ENCODE measurements at regions of chr11 and their contacts with region 1.

Region 1: DNA sequence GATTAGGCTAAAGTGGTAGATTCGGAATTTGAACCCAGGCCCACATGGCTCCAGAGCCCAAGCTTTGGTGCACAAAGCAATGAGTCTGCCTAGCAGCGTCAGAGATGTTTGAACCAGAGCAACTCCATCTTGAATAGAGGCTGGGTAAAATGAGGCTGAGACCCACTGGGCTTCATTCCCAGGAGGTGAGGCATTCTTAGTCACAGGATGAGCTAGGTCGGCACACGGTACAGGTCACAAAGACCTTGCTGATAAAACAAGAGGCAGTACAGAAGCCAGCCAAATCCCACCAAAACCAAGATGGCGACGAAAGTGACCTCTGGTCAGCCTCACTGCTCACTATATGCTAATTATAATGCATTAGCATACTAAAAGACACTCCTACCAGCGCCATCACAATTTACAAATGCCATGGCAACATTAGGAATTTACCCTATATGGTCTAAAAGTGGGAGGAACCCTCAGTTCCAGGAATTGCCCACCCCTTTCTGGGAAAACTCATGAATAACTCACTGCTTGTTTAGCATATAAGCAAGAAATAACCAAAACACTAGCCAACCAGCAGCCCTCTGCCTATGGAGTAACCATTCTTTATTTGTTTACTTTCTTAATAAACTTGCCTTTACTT is 40.3 kb upstream of the DAGLA start:
- DNase-seq: no peak
- H3K4me3 ChIP-seq: no peak overlapping the region
- H3K27ac ChIP-seq: no peak overlapping the region
- H3K4me1 ChIP-seq: peaks cover 0 to 5% (median 3%) of the 10 kb centered on the region in 4 experiments; a peak in 2 of 7 replicates
- H3K27me3 ChIP-seq: no peaks in the 10 kb centered on the region
- CTCF ChIP-seq: no peak
- EP300 ChIP-seq: no peak
- POLR2A ChIP-seq: no peak
- RAD21 ChIP-seq: no peak

Region 2: DNA sequence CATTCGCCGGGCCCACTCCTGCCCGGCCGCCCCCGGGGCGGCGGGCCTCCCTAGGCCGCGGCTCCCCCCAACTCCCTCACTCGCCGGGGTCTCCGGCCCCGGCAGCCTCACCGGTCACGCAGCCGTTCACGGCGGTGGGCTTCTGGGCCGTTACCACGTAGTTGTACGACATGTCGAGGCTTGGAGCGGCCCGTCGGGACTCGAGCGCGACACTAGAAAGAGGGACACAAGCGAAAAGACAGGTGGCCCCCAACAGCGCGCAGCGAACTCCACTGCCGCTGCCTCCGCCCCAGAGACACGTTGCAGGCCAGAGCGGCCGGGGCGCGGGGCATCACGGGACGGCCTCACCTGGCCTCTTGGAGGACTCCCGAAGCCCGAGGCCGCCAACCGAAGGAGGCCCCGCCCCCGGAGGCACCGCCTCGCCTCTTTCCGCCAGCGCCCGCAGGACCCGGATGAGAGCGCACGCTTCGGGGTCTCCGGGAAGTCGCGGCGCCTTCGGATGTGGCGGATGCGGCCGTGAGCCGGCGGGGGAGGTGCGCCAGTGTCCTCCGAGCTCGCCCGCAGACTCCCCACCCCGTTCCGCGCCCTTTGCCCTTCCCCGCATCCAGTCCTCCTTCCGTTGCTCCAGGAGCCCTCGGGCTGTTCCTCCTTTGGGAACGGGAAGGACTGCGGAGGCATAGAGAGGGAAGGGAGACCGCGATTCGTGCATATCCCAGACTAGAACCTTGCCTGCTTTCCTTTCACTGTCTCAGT is 307.0 kb before region 1 on chr11 and contains the starts of genes DDB1 and TKFC:
- CTCF ChIA-PET with region 1: interaction called, 10 read pairs
- POLR2A ChIA-PET with region 1: no interaction called
- DNase-seq: peak; percentile 84 to 99
- H3K4me3 ChIP-seq: peak within 1 kb of the TSS; percentile 79 to 96 (median 92)
- H3K27ac ChIP-seq: peak within 1 kb of the TSS; percentile 96
- H3K4me1 ChIP-seq: peaks cover 5 to 14% (median 9%) of the 10 kb centered on the region in 4 experiments
- H3K27me3 ChIP-seq: no peaks in the 10 kb centered on the region
- CTCF ChIP-seq: no peak
- EP300 ChIP-seq: no peak
- POLR2A ChIP-seq: peak; percentile 94 to 96
- RAD21 ChIP-seq: no peak
- total RNA-seq, gene DDB1: 275 and 283 TPM in 2 replicates
- total RNA-seq, gene TKFC: 53.5 and 56.0 TPM in 2 replicates

Region 3: GRCh38 chr11:61516675-61517572 is 123.0 kb before region 1 on chr11:
- CTCF ChIA-PET with region 1: interaction called, 114 read pairs
- POLR2A ChIA-PET with region 1: no interaction called
- DNase-seq: peak in 1 of 2 experiments; percentile 96
- H3K4me3 ChIP-seq: peak overlapping the region in 1 of 4 experiments; percentile 39; a peak in 1 of 8 replicates
- H3K27ac ChIP-seq: no peak overlapping the region
- H3K4me1 ChIP-seq: peaks cover 0 to 41% (median 27%) of the 10 kb centered on the region in 4 experiments; a peak in 6 of 7 replicates
- H3K27me3 ChIP-seq: no peaks in the 10 kb centered on the region; a peak in 2 of 7 replicates
- CTCF ChIP-seq: peak in 2 of 3 experiments; percentile 98; a peak in 3 of 4 replicates
- EP300 ChIP-seq: no peak
- POLR2A ChIP-seq: no peak
- RAD21 ChIP-seq: peak; percentile 98 to 99

Region 4: GRCh38 chr11:61567286-61568061 is 72.5 kb before region 1 on chr11:
- CTCF ChIA-PET with region 1: interaction called, 60 read pairs
- POLR2A ChIA-PET with region 1: no interaction called
- DNase-seq: peak; percentile 58 to 98
- H3K4me3 ChIP-seq: peak overlapping the region; percentile 16 to 54 (median 39); a peak in 6 of 8 replicates
- H3K27ac ChIP-seq: no peak overlapping the region
- H3K4me1 ChIP-seq: peaks cover 0 to 14% (median 5%) of the 10 kb centered on the region in 4 experiments; a peak in 5 of 7 replicates
- H3K27me3 ChIP-seq: peaks cover 0 to 10% (median 4%) of the 10 kb centered on the region in 4 experiments; a peak in 3 of 7 replicates
- CTCF ChIP-seq: peak; percentile 95 to 98 (median 96)
- EP300 ChIP-seq: no peak
- POLR2A ChIP-seq: no peak
- RAD21 ChIP-seq: peak; percentile 40 to 63; a peak in 3 of 4 replicates

Region 5: DNA sequence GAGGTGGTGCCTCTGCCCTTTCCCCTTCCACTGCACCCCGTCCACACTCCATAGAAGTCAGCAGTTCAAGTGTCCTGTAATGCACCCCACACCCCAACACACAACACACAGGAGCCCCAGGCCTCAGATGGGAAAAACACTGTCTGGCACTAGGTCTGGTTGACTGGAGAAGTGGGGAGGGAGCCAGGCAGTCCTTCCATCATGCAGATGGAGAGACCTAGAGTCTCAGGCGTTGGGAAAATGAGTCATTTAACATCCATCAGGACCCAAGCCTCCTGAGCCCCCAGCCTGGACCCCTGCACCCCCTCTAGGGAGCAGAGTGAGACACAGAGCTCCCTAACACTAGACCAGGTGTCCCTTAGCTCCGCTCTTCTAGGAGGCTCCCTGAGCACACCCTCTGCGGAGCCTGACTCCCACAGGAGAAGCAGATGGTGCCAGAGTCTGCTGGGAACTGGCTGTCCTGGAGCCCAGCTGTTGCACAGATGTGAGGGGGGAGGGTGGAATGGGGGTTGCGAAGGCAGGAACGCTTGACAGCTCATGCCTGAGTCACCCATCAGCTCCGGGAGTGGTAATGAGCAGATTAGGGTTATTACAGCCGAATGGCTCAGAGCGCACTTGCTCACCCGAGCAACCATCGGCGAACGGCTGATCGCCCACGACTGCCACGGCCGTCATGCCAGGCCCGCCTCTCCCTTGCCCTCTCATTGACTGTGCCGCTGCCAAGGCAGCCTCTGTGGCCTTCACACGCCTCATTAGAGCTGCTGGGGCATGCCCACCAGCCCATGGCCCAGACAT is 37.0 kb before region 1 on chr11:
- CTCF ChIA-PET with region 1: interaction called, 335 read pairs
- POLR2A ChIA-PET with region 1: no interaction called
- DNase-seq: no peak
- H3K4me3 ChIP-seq: no peak overlapping the region
- H3K27ac ChIP-seq: no peak overlapping the region
- H3K4me1 ChIP-seq: peaks cover 5 to 22% (median 18%) of the 10 kb centered on the region in 4 experiments
- H3K27me3 ChIP-seq: no peaks in the 10 kb centered on the region; a peak in 1 of 7 replicates
- CTCF ChIP-seq: no peak
- EP300 ChIP-seq: no peak
- POLR2A ChIP-seq: no peak
- RAD21 ChIP-seq: no peak

Region 6: DNA sequence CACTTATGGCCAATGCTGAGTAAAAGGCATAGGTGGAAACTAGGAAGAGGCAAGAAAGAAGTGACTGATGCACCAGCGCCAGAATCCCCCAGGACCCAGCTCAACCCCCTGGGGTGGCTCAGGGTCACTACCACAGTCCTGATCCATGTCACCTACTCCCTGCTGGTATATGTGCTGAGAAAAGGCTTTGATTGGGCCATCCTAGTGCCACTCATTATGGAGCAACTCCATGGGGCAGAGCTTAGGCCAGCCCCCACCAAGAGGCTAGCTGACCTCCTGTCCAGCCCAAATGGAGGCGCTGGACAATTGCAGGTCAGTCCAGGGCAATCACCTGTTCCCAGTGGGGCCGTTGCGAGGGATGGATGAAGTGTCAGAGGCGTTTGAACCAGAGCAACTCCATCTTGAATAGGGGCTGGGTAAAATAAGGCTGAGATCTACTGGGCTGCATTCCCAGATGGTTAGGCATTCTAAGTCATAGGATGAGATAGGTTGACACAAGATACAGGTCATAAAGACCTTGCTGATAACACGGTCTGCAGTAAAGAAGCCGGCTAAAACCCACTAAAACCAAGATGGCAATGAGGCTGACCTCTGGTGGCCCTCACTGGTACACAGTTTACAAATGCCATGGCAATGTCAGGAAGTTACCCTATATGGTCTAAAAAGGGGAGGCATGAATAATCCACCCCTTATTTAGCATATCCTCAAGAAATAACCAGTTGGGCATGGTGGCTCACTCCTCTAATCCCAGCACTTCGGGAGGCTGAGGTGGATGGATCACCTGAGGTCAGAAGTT is 19.7 kb after region 1 on chr11:
- CTCF ChIA-PET with region 1: interaction called, 22 read pairs
- POLR2A ChIA-PET with region 1: no interaction called
- DNase-seq: no peak
- H3K4me3 ChIP-seq: no peak overlapping the region
- H3K27ac ChIP-seq: no peak overlapping the region
- H3K4me1 ChIP-seq: peaks cover 4 to 10% (median 7%) of the 10 kb centered on the region in 4 experiments
- H3K27me3 ChIP-seq: no peaks in the 10 kb centered on the region
- CTCF ChIP-seq: peak in 2 of 3 experiments; percentile 33; a peak in 3 of 4 replicates
- EP300 ChIP-seq: no peak
- POLR2A ChIP-seq: no peak
- RAD21 ChIP-seq: peak in 1 of 2 experiments; percentile 31; a peak in 1 of 4 replicates

Region 7: GRCh38 chr11:61855939-61856680 is 216.2 kb after region 1 on chr11:
- CTCF ChIA-PET with region 1: no interaction called
- POLR2A ChIA-PET with region 1: no interaction called
- DNase-seq: no peak
- H3K4me3 ChIP-seq: no peak overlapping the region
- H3K27ac ChIP-seq: no peak overlapping the region
- H3K4me1 ChIP-seq: no peaks in the 10 kb centered on the region
- H3K27me3 ChIP-seq: no peaks in the 10 kb centered on the region
- CTCF ChIP-seq: no peak
- EP300 ChIP-seq: no peak
- POLR2A ChIP-seq: no peak
- RAD21 ChIP-seq: no peak

Measured in H1 (cell line).